Mammary epithelial cell (primary cell): ENCODE measurements at regions of chr5 and their contacts with region 1.

Region 1: GRCh38 chr5:435961-436640 is 6.9 kb upstream of the EXOC3 start:
- DNase-seq: no peak
- H3K4me3 ChIP-seq: no peak overlapping the region
- H3K27ac ChIP-seq: no peak overlapping the region
- H3K4me1 ChIP-seq: no peaks in the 10 kb centered on the region
- H3K27me3 ChIP-seq: no peaks in the 10 kb centered on the region
- CTCF ChIP-seq: peak; percentile 35 to 59

Region 2: GRCh38 chr5:42243-42642 is 393.9 kb before region 1 on chr5:
- CTCF ChIA-PET with region 1: no interaction called
- dilution Hi-C with region 1: no loop called
- in situ Hi-C with region 1: no loop called
- intact Hi-C with region 1: loop called (anchors 1 kb)
- DNase-seq: peak; percentile 19
- H3K4me3 ChIP-seq: no peak overlapping the region
- H3K27ac ChIP-seq: no peak overlapping the region
- H3K4me1 ChIP-seq: no peaks in the 10 kb centered on the region
- H3K27me3 ChIP-seq: peaks cover 4% of the 10 kb centered on the region
- CTCF ChIP-seq: peak; percentile 44 to 75

Region 3: DNA sequence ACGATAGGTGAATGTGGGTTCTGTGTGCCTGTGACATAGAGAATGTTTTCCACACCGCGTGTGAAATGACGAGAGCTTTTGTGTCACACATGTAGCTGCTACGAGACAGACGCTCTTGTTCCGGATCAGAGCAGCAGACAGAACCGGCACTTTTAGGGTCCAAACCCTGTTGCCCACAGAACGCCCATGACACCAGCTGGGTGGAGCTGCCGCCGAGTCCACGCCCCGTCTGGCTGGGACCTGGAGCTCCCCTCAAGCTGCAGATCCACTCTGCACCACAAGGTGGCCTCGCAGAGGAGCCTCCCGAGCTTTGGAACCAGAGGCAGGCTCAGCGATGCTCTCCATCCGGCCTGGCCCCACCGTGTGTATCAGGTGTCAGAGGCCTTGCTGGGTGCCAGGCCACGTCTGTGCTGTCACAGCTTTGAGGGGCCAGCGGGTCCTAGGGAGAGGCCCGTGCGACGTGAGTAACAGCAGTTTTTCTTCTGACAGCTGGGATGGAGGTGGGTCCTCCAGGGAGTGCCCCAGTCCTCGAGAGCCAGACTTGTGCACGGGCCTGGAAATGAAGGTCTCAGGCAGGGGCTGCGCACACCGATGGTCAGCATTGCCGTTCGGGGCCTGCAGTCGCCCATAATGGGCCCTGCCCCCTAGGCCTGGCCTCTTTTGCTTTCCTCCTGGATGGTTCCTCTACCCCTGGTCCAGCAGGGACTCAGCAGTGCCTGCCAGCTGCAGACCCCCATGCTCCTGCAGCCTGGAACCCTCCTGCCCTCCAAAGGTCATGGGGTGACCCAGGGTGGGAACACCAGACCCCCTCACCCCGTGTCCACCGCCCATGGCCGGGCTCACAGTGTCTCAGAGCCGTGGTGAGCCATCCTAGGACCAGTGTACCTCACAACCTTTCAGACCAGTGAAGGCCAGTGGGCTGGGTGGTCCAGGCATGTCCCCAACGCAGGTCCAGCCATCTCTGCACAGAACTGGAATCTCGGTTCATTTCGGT is 247.3 kb before region 1 on chr5:
- CTCF ChIA-PET with region 1: no interaction called
- dilution Hi-C with region 1: no loop called
- in situ Hi-C with region 1: no loop called
- intact Hi-C with region 1: loop called (anchors 2 kb)
- DNase-seq: peak; percentile 70
- H3K4me3 ChIP-seq: peak overlapping the region in 1 of 3 experiments; percentile 2
- H3K27ac ChIP-seq: no peak overlapping the region
- H3K4me1 ChIP-seq: peaks cover 5% of the 10 kb centered on the region
- H3K27me3 ChIP-seq: peaks cover 6% of the 10 kb centered on the region
- CTCF ChIP-seq: peak; percentile 84 to 97

Region 4: GRCh38 chr5:317086-317811 is 118.9 kb before region 1 on chr5:
- CTCF ChIA-PET with region 1: no interaction called
- dilution Hi-C with region 1: no loop called
- in situ Hi-C with region 1: no loop called
- intact Hi-C with region 1: loop called (anchors 2 kb)
- DNase-seq: peak; percentile 30
- H3K4me3 ChIP-seq: no peak overlapping the region
- H3K27ac ChIP-seq: no peak overlapping the region
- H3K4me1 ChIP-seq: peaks cover 15% of the 10 kb centered on the region
- H3K27me3 ChIP-seq: peaks cover 10% of the 10 kb centered on the region
- CTCF ChIP-seq: peak; percentile 30 to 51

Region 5: DNA sequence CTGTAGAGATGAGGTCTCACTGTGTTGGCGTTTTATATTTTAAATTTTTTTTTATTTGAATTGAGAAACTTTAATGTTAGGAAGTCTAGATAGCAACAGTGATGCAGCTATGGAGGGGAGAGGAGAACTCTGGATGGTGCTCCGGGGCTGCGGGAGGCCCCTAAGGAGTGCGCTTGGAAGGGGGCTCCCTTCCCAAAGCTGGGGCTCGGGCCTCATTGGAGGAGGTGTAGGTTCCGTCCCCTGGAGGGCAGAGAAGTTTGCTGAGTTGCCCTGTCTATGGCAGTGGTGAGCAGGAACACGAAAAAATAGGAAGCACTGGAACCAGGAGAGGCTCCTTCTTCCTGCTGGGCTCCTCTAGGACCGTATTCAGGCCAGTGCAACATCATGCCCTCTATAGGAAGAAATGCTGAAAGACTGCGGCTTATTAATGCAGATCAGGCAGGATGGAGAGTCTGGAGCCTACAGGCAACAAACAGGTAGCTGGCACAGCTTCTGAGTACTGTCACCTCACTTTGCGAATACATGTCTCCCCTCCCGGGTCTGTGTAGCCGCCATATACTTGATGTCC is 98.5 kb before region 1 on chr5:
- CTCF ChIA-PET with region 1: no interaction called
- dilution Hi-C with region 1: loop called (anchors 5 kb)
- in situ Hi-C with region 1: no loop called
- intact Hi-C with region 1: no loop called
- DNase-seq: peak; percentile 19
- H3K4me3 ChIP-seq: no peak overlapping the region
- H3K27ac ChIP-seq: no peak overlapping the region
- H3K4me1 ChIP-seq: no peaks in the 10 kb centered on the region
- H3K27me3 ChIP-seq: no peaks in the 10 kb centered on the region
- CTCF ChIP-seq: peak; percentile 48 to 68

Region 6: DNA sequence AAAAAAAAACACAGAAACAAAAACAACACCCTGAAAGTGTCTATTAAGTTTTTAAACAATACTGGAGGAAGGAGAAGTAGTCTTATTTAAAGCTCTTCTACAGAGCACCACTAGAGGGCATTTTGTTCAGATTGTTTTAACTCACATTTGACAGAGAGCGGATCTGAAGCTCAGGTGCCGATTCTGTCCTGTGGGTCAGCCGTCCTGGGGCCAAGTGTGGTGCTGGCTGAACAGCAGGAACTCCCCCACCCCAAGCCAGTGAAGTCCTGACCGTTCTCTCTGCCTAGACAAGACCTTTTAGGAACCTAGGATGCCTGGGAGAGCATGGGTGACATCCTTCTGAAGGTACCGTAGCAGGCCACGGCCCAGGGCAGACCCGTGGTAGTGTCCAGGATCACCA is 10.8 kb after region 1 on chr5:
- CTCF ChIA-PET with region 1: no interaction called
- dilution Hi-C with region 1: no loop called
- in situ Hi-C with region 1: no loop called
- intact Hi-C with region 1: no loop called
- DNase-seq: peak; percentile 16
- H3K4me3 ChIP-seq: no peak overlapping the region
- H3K27ac ChIP-seq: no peak overlapping the region
- H3K4me1 ChIP-seq: peaks cover 15% of the 10 kb centered on the region
- H3K27me3 ChIP-seq: no peaks in the 10 kb centered on the region
- CTCF ChIP-seq: peak; percentile 61 to 63

Region 7: GRCh38 chr5:1294835-1295649 is 858.9 kb after region 1 on chr5 and contains the start of gene TERT:
- CTCF ChIA-PET with region 1: no interaction called
- dilution Hi-C with region 1: no loop called
- in situ Hi-C with region 1: no loop called
- intact Hi-C with region 1: no loop called
- DNase-seq: no peak
- H3K4me3 ChIP-seq: no peak within 1 kb of the TSS
- H3K27ac ChIP-seq: no peak within 1 kb of the TSS
- H3K4me1 ChIP-seq: no peaks in the 10 kb centered on the region
- H3K27me3 ChIP-seq: peaks cover 10% of the 10 kb centered on the region
- CTCF ChIP-seq: no peak
- total RNA-seq, gene TERT: not detected